ENCODE measurements at regions of chr3 and their contacts with region 1.

Region 1: DNA sequence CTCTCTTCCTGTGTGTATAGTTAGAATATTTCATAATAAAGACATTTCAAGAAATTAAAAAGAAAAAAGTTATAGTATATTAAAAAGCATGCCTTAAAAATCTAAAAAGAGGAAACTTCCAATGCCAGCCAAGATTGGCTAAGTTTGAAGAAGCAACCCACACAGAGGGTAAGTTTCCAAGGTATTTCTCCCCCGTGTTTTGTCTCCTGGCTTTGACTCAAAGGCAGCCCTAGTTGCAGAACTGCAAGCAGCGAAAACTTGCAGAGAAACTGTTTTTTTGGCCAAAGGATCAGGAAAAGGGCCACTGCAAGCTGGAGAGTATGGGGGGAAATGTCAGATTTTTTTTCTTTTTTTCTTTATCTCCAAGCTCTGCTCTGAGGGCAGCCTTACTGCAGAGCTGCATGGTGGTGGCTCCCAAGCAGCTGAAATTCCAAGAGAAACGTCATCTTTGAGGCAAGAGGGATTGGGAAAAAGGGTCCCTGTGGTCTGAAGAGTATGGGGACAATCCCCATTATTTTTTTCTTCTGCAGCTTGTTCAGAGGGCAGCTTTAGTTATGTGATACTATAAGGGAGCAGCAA is 23.0 kb downstream of the HACL1 start:
- DNase-seq: no peak
- H3K4me3 ChIP-seq: no peak overlapping the region
- H3K27ac ChIP-seq: no peak overlapping the region
- H3K4me1 ChIP-seq: peaks cover 0 to 22% (median 7%) of the 10 kb centered on the region in 6 donors
- H3K27me3 ChIP-seq: no peaks in the 10 kb centered on the region
- CTCF ChIP-seq: no peak
- POLR2A ChIP-seq: no peak

Region 2: GRCh38 chr3:15098503-15099363 is 479.6 kb before region 1 on chr3 and contains the start of gene RBSN:
- intact Hi-C with region 1: no loop called
- DNase-seq: peak; percentile 100
- H3K4me3 ChIP-seq: peak within 1 kb of the TSS; percentile 62 to 88 (median 77)
- H3K27ac ChIP-seq: peak within 1 kb of the TSS; percentile 79 to 94 (median 90)
- H3K4me1 ChIP-seq: peaks cover 14 to 71% (median 41%) of the 10 kb centered on the region in 6 donors
- H3K27me3 ChIP-seq: no peaks in the 10 kb centered on the region
- CTCF ChIP-seq: peak in 1 of 11 experiments; percentile 26
- POLR2A ChIP-seq: peak in 2 of 3 donors; percentile 42 to 74
- total RNA-seq, gene RBSN: 21.4 to 34.5 (median 31.6) TPM

Region 3: GRCh38 chr3:15241341-15241740 is 337.0 kb before region 1 on chr3:
- intact Hi-C with region 1: loop called (anchors 10 kb)
- DNase-seq: no peak
- H3K4me3 ChIP-seq: no peak overlapping the region
- H3K27ac ChIP-seq: no peak overlapping the region
- H3K4me1 ChIP-seq: no peaks in the 10 kb centered on the region
- H3K27me3 ChIP-seq: no peaks in the 10 kb centered on the region
- CTCF ChIP-seq: peak in 7 of 11 experiments; percentile 18 to 51 (median 38)
- POLR2A ChIP-seq: no peak

Region 4: DNA sequence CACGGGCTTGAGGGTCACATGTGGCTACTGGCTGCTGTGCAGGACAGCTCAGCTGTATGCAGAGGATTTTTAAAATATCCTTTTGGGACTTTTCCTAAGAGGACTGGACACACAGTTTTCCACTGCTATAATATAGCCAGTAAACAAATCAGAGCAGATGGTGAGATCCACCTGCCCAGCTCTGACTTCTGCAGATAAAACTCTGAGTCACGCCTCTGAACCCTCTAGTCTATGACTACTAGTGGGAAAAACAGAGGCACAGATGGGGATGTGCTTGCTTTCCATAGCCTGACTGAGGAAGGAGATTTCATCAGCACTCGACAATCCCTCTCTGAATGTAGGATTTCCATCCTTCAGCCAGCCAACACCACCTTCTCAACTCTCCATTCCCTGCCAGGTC is 102.0 kb before region 1 on chr3:
- intact Hi-C with region 1: no loop called
- DNase-seq: no peak
- H3K4me3 ChIP-seq: no peak overlapping the region
- H3K27ac ChIP-seq: no peak overlapping the region
- H3K4me1 ChIP-seq: no peaks in the 10 kb centered on the region
- H3K27me3 ChIP-seq: no peaks in the 10 kb centered on the region
- CTCF ChIP-seq: no peak
- POLR2A ChIP-seq: no peak

Region 5: GRCh38 chr3:15512166-15512565 is 66.2 kb before region 1 on chr3:
- intact Hi-C with region 1: no loop called
- DNase-seq: no peak
- H3K4me3 ChIP-seq: no peak overlapping the region
- H3K27ac ChIP-seq: no peak overlapping the region
- H3K4me1 ChIP-seq: peaks cover 0 to 23% (median 6%) of the 10 kb centered on the region in 6 donors
- H3K27me3 ChIP-seq: no peaks in the 10 kb centered on the region
- CTCF ChIP-seq: no peak
- POLR2A ChIP-seq: no peak